ENCODE measurements at regions of chr20 and their contacts with region 1.

Region 1: GRCh38 chr20:62302341-62303058 is at the start of gene ADRM1:
- DNase-seq: peak; percentile 97 to 98 (median 97)
- ATAC-seq: peak; percentile 83 to 90 (median 90)
- H3K4me3 ChIP-seq: peak within 1 kb of the TSS; percentile 59 to 96 (median 88)
- H3K27ac ChIP-seq: peak within 1 kb of the TSS; percentile 89 to 100 (median 98)
- H3K4me1 ChIP-seq: peaks cover 9 to 36% (median 25%) of the 10 kb centered on the region in 12 donors
- H3K27me3 ChIP-seq: no peaks in the 10 kb centered on the region
- CTCF ChIP-seq: peak; percentile 88 to 99 (median 98)
- POLR2A ChIP-seq: peak; percentile 38 to 81
- total RNA-seq, gene ADRM1: 66.8 to 218 (median 79.8) TPM

Region 2: GRCh38 chr20:62357187-62357667 is 54.7 kb after region 1 on chr20:
- intact Hi-C with region 1: loop called in 4 of 10 experiments (anchors 5 to 10 kb)
- DNase-seq: peak; percentile 85 to 92 (median 87)
- ATAC-seq: peak; percentile 17 to 56 (median 44)
- H3K4me3 ChIP-seq: peak overlapping the region in 11 of 12 donors; percentile 2 to 48 (median 34)
- H3K27ac ChIP-seq: peak overlapping the region; percentile 69 to 97 (median 93)
- H3K4me1 ChIP-seq: peaks cover 36 to 96% (median 84%) of the 10 kb centered on the region in 12 donors
- H3K27me3 ChIP-seq: peaks cover 0 to 4% (median 0%) of the 10 kb centered on the region in 9 donors
- CTCF ChIP-seq: no peak
- POLR2A ChIP-seq: peak in 1 of 2 donors; percentile 12

Region 3: GRCh38 chr20:62368976-62369814 is 66.7 kb after region 1 on chr20:
- intact Hi-C with region 1: loop called in 1 of 10 experiments (anchors 5 kb)
- DNase-seq: peak in 2 of 5 donors; percentile 47 to 62
- ATAC-seq: peak in 1 of 4 donors; percentile 1
- H3K4me3 ChIP-seq: peak overlapping the region in 7 of 12 donors; percentile 7 to 96 (median 91)
- H3K27ac ChIP-seq: peak overlapping the region in 8 of 12 donors; percentile 37 to 97 (median 80)
- H3K4me1 ChIP-seq: peaks cover 6 to 71% (median 59%) of the 10 kb centered on the region in 12 donors
- H3K27me3 ChIP-seq: peaks cover 0 to 36% (median 0%) of the 10 kb centered on the region in 9 donors
- CTCF ChIP-seq: peak in 11 of 12 donors; percentile 26 to 63 (median 39)
- POLR2A ChIP-seq: no peak

Region 4: GRCh38 chr20:62401331-62401779 is 98.9 kb after region 1 on chr20:
- intact Hi-C with region 1: loop called in 2 of 10 experiments (anchors 5 kb)
- DNase-seq: no peak
- ATAC-seq: no peak
- H3K4me3 ChIP-seq: no peak overlapping the region
- H3K27ac ChIP-seq: no peak overlapping the region
- H3K4me1 ChIP-seq: peaks cover 0 to 14% (median 11%) of the 10 kb centered on the region in 12 donors
- H3K27me3 ChIP-seq: no peaks in the 10 kb centered on the region
- CTCF ChIP-seq: peak in 2 of 12 donors; percentile 5 to 12
- POLR2A ChIP-seq: no peak

Region 5: DNA sequence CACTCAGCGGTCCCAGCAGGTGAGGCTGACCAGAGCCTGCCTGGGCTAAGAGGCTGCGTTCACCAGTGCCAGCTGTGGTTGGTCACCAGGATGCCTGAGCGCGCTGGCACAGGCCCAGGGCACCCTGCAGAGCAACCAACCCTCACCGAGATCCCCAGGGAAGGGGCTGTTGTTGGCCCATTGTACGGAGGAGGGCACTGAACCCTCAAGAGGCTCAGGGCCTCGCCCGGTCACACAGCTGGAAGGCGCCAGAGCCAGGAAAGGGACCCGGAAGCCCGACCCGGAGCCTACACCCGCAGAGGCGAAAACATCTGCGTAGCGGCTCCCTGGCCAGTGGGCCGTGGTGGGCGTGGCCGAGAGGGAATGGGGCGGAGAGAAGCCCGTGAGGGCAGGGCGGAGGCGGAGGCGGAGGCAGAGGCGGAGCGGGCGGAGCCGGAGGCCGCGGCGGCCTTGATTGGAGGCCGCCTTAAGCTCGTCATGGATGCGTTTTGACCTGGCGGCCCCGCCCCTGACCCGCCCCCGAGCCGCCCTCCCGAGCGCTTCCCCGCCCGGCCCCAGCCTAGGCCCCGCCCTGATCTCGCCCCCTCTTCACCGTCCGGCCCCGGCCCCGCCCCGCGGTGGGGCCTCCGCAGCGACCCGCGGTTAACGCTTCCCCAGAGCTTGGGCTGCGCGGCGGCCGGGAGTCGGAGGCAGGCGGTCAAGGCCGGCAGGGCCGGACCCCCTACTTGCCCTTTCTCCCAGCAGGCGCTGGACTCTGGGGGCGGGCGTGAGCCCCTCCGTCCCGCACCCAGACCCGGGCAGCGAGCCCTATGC is 491.6 kb after region 1 on chr20:
- intact Hi-C with region 1: loop called in 2 of 10 experiments (anchors 5 to 10 kb)
- DNase-seq: peak; percentile 96 to 100 (median 97)
- ATAC-seq: peak; percentile 89 to 94 (median 92)
- H3K4me3 ChIP-seq: peak overlapping the region; percentile 31 to 97 (median 78)
- H3K27ac ChIP-seq: peak overlapping the region; percentile 14 to 96 (median 92)
- H3K4me1 ChIP-seq: peaks cover 4 to 50% (median 23%) of the 10 kb centered on the region in 12 donors
- H3K27me3 ChIP-seq: no peaks in the 10 kb centered on the region
- CTCF ChIP-seq: no peak
- POLR2A ChIP-seq: peak; percentile 71 to 93

Region 6: GRCh38 chr20:62808211-62808865 is 505.8 kb after region 1 on chr20:
- intact Hi-C with region 1: loop called in 1 of 10 experiments (anchors 10 kb)
- DNase-seq: peak; percentile 62 to 88 (median 67)
- ATAC-seq: peak; percentile 27 to 67 (median 46)
- H3K4me3 ChIP-seq: no peak overlapping the region
- H3K27ac ChIP-seq: no peak overlapping the region
- H3K4me1 ChIP-seq: peaks cover 0 to 44% (median 33%) of the 10 kb centered on the region in 12 donors
- H3K27me3 ChIP-seq: no peaks in the 10 kb centered on the region
- CTCF ChIP-seq: peak; percentile 91 to 96 (median 94)
- POLR2A ChIP-seq: no peak

Measured in heart left ventricle (tissue), 16 donors.